GM12878 (cell line): ENCODE measurements at regions of chr3 and their contacts with region 1.

Region 1: DNA sequence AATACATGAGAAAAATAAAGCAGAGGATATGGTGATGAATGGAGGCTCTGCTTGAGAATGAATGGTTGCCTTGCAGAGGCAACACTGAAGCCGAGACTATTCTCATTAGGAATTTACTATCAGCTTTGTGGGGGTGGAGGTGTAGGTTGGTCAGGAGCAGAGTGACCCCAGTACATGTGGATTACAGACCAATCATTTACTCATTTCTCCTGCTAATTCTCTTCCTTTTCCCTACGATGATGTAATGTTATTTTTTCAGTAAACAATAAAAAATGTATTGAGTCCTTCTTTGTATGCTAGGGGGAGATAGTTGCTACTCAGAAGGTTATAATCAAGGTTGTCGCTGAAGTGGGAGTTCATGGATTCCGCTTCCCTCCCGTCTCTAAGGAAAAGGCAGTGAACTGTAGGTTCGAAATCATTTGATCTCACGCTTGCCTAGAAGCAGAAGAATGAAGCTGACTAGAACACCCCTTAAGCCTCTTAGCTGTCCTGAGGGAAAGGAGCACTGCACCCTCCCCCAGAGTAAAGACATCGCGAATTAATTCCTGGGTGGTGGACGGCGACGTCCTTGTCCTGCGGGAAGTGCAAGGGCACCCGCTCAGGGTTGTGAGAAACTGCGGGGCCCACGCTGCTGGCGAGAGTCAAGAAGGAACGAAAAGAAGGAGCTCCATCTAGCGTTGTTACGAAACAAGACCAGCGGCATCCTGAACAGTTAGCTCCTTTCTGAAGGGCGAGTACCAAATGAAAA is 213.2 kb upstream of the PFN2 start:
- DNase-seq: peak; percentile 37
- ATAC-seq: peak; percentile 100
- H3K4me3 ChIP-seq: no peak overlapping the region
- H3K27ac ChIP-seq: no peak overlapping the region
- H3K4me1 ChIP-seq: no peaks in the 10 kb centered on the region
- H3K27me3 ChIP-seq: no peaks in the 10 kb centered on the region
- CTCF ChIP-seq: peak; percentile 70 to 81 (median 73)
- EP300 ChIP-seq: no peak
- POLR2A ChIP-seq: no peak
- RAD21 ChIP-seq: peak; percentile 82

Region 2: GRCh38 chr3:149879872-149880271 is 304.0 kb before region 1 on chr3:
- CTCF ChIA-PET with region 1: interaction called, 25 read pairs
- POLR2A ChIA-PET with region 1: no interaction called
- RAD21 ChIA-PET with region 1: interaction called, 12 read pairs
- SMC1A ChIA-PET with region 1: interaction called, 7 read pairs
- in situ Hi-C with region 1: no loop called
- intact Hi-C with region 1: loop called (anchors 2 kb)
- DNase-seq: no peak
- ATAC-seq: peak; percentile 95
- H3K4me3 ChIP-seq: no peak overlapping the region
- H3K27ac ChIP-seq: no peak overlapping the region
- H3K4me1 ChIP-seq: no peaks in the 10 kb centered on the region
- H3K27me3 ChIP-seq: no peaks in the 10 kb centered on the region
- CTCF ChIP-seq: peak; percentile 43 to 59 (median 55); a peak in 5 of 6 replicates
- EP300 ChIP-seq: no peak
- POLR2A ChIP-seq: no peak
- RAD21 ChIP-seq: peak; percentile 30; the same call in 1 of the 2 replicates

Region 3: GRCh38 chr3:149969940-149970715 is 213.7 kb before region 1 on chr3:
- CTCF ChIA-PET with region 1: interaction called, 128 read pairs
- POLR2A ChIA-PET with region 1: no interaction called
- RAD21 ChIA-PET with region 1: interaction called, 111 read pairs
- SMC1A ChIA-PET with region 1: interaction called, 90 read pairs
- in situ Hi-C with region 1: loop called (anchors 5 kb)
- intact Hi-C with region 1: loop called (anchors 1 kb)
- DNase-seq: peak; percentile 39
- ATAC-seq: peak; percentile 82
- H3K4me3 ChIP-seq: peak overlapping the region; percentile 66
- H3K27ac ChIP-seq: peak overlapping the region; percentile 15; the same call in 1 of the 2 replicates
- H3K4me1 ChIP-seq: no peaks in the 10 kb centered on the region
- H3K27me3 ChIP-seq: 0 out of 4 replicates have a peak, but pooled peaks cover 0 to 4% of the 10 kb centered on the region in 2 experiments
- CTCF ChIP-seq: no peak
- EP300 ChIP-seq: no peak
- POLR2A ChIP-seq: no peak
- RAD21 ChIP-seq: no peak

Region 4: GRCh38 chr3:150022381-150023238 is 161.2 kb before region 1 on chr3:
- CTCF ChIA-PET with region 1: interaction called, 7 read pairs
- POLR2A ChIA-PET with region 1: no interaction called
- RAD21 ChIA-PET with region 1: interaction called, 10 read pairs
- SMC1A ChIA-PET with region 1: interaction called, 5 read pairs
- in situ Hi-C with region 1: no loop called
- intact Hi-C with region 1: loop called (anchors 5 kb)
- DNase-seq: peak; percentile 23
- ATAC-seq: peak; percentile 74
- H3K4me3 ChIP-seq: no peak overlapping the region
- H3K27ac ChIP-seq: no peak overlapping the region
- H3K4me1 ChIP-seq: peaks cover 4% of the 10 kb centered on the region; the same call in 1 of the 2 replicates
- H3K27me3 ChIP-seq: no peaks in the 10 kb centered on the region
- CTCF ChIP-seq: no peak
- EP300 ChIP-seq: no peak
- POLR2A ChIP-seq: no peak
- RAD21 ChIP-seq: no peak

Region 5: GRCh38 chr3:150170852-150171520 is 12.9 kb before region 1 on chr3:
- CTCF ChIA-PET with region 1: interaction called, 11 read pairs
- POLR2A ChIA-PET with region 1: no interaction called
- RAD21 ChIA-PET with region 1: interaction called, 11 read pairs
- SMC1A ChIA-PET with region 1: interaction called, 7 read pairs
- in situ Hi-C with region 1: no loop called
- intact Hi-C with region 1: no loop called
- DNase-seq: no peak
- ATAC-seq: peak; percentile 89
- H3K4me3 ChIP-seq: no peak overlapping the region
- H3K27ac ChIP-seq: no peak overlapping the region
- H3K4me1 ChIP-seq: 0 out of 2 replicates have a peak, but pooled peaks cover 4% of the 10 kb centered on the region
- H3K27me3 ChIP-seq: no peaks in the 10 kb centered on the region
- CTCF ChIP-seq: no peak
- EP300 ChIP-seq: no peak
- POLR2A ChIP-seq: no peak
- RAD21 ChIP-seq: no peak

Region 6: GRCh38 chr3:150293401-150294061 is 109.7 kb after region 1 on chr3:
- CTCF ChIA-PET with region 1: no interaction called
- POLR2A ChIA-PET with region 1: no interaction called
- RAD21 ChIA-PET with region 1: no interaction called
- SMC1A ChIA-PET with region 1: no interaction called
- in situ Hi-C with region 1: no loop called
- intact Hi-C with region 1: no loop called
- DNase-seq: no peak
- ATAC-seq: no peak
- H3K4me3 ChIP-seq: no peak overlapping the region
- H3K27ac ChIP-seq: no peak overlapping the region
- H3K4me1 ChIP-seq: no peaks in the 10 kb centered on the region
- H3K27me3 ChIP-seq: no peaks in the 10 kb centered on the region
- CTCF ChIP-seq: no peak
- EP300 ChIP-seq: no peak
- POLR2A ChIP-seq: no peak
- RAD21 ChIP-seq: no peak